ENCODE measurements at regions of chr20 and their contacts with region 1.

Region 1: DNA sequence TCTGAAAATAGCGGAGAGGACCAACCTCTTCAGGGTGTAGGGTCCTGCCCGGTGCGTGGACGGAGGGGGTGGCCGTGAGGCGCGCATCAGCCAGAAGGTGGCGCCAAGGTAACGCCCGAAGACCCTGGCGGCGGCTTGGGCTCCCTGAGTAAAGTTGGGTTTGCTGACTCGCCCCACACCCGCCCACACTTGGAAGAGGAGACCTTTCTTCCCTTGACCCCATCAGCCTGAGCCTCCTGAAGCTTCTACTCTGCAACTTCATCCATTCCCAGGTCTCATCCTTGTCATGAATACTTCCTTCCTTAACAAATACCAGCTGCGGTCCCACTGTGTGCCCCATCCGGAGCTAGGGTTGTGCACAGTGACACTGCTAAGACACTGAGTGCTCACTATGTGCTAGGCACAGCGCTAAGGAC is 14.6 kb downstream of the CD40 start:
- DNase-seq: peak; percentile 76 to 90 (median 89)
- ATAC-seq: peak; percentile 84 to 87
- H3K4me3 ChIP-seq: no peak overlapping the region
- H3K27ac ChIP-seq: no peak overlapping the region
- H3K4me1 ChIP-seq: no peaks in the 10 kb centered on the region
- H3K27me3 ChIP-seq: no peaks in the 10 kb centered on the region

Region 2: DNA sequence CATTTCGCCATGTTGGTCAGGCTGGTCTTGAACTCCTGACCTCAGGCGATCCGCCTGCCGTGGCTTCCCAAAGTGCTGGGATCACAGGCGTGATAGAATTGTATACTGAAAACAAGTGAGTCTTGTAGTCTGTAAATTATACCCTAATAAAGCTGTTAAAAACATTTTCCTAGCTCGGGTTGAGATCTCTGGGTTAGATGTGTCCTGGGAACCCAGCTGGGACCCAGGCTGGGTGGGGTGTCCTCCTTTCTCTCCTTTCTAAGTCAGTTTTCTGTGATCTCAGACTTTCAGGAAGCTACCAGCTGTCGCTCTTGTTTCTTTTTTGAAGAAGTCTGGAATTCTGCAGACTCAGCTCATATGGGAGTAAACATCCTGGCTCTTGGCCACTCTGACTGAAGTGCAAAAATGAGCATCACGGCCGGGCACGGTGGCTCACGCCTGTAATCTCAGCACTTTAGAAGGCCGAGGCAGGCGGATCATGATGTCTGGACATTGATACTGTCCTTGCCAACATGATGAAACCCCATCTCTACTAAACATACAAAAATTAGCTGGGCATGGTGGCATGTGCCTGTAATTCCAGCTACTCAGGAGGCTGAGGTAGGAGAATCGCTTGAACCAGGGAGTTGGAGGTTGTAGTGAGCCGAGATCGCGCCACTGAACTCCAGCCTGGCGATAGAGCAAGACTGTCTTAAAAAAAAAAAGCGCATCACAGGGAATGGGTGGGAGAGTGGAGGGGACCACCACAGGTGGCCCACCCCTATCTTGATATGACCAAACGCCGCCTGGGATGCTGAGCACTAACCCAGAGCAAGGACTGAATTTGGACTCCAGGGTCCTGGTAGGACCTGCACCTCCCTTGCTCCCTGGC is 208.1 kb before region 1 on chr20:
- intact Hi-C with region 1: no loop called
- DNase-seq: peak in 1 of 3 donors; percentile 56
- ATAC-seq: peak; percentile 51
- H3K4me3 ChIP-seq: no peak overlapping the region
- H3K27ac ChIP-seq: peak overlapping the region; percentile 86
- H3K4me1 ChIP-seq: no peaks in the 10 kb centered on the region
- H3K27me3 ChIP-seq: no peaks in the 10 kb centered on the region

Region 3: GRCh38 chr20:46343348-46343974 is 210.7 kb after region 1 on chr20:
- intact Hi-C with region 1: loop called (anchors 2 to 5 kb)
- DNase-seq: peak in 1 of 3 donors; percentile 11
- ATAC-seq: peak; percentile 23 to 29
- H3K4me3 ChIP-seq: no peak overlapping the region
- H3K27ac ChIP-seq: no peak overlapping the region
- H3K4me1 ChIP-seq: peaks cover 4% of the 10 kb centered on the region
- H3K27me3 ChIP-seq: no peaks in the 10 kb centered on the region

Region 4: GRCh38 chr20:46349035-46349741 is 216.5 kb after region 1 on chr20:
- intact Hi-C with region 1: loop called (anchors 2 to 5 kb)
- DNase-seq: peak; percentile 63 to 86 (median 86)
- ATAC-seq: peak; percentile 71 to 78
- H3K4me3 ChIP-seq: no peak overlapping the region
- H3K27ac ChIP-seq: no peak overlapping the region
- H3K4me1 ChIP-seq: peaks cover 2% of the 10 kb centered on the region
- H3K27me3 ChIP-seq: no peaks in the 10 kb centered on the region